Psoas muscle (tissue), 8 donors: ENCODE measurements at regions of chr4 and their contacts with region 1.

Region 1: GRCh38 chr4:85798012-85798770 is 323.2 kb downstream of the ARHGAP24 start:
- DNase-seq: no peak
- ATAC-seq: no peak
- H3K4me3 ChIP-seq: no peak overlapping the region
- H3K27ac ChIP-seq: no peak overlapping the region
- H3K4me1 ChIP-seq: peaks cover under 1% of the 10 kb centered on the region
- H3K27me3 ChIP-seq: no peaks in the 10 kb centered on the region
- CTCF ChIP-seq: no peak

Region 2: DNA sequence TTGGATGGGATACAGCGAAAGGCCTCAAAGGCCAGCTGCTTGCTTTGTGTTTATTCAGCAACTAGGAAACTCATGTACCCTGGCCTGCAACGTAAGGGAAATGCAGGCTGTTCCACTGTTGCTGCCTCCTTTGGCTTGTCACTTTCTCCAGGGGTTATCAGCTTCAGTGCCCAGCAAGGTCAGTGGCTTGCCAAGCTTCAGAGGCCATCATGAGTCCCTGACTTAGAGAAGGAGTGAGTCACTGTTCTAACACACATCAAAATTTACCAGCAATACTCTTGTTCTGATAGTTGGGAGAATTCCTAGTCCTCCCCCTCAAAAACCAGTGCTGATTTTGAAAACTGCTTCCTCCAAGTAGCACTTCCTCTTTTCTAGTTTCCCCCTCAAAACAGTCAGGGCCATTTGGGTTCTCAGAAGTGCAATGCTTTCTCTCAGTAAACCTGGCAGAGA is 72.4 kb before region 1 on chr4:
- intact Hi-C with region 1: no loop called
- DNase-seq: peak; percentile 44 to 59
- ATAC-seq: peak; percentile 11 to 65 (median 64)
- H3K4me3 ChIP-seq: no peak overlapping the region
- H3K27ac ChIP-seq: peak overlapping the region; percentile 48
- H3K4me1 ChIP-seq: peaks cover 2% of the 10 kb centered on the region
- H3K27me3 ChIP-seq: no peaks in the 10 kb centered on the region
- CTCF ChIP-seq: no peak

Region 3: DNA sequence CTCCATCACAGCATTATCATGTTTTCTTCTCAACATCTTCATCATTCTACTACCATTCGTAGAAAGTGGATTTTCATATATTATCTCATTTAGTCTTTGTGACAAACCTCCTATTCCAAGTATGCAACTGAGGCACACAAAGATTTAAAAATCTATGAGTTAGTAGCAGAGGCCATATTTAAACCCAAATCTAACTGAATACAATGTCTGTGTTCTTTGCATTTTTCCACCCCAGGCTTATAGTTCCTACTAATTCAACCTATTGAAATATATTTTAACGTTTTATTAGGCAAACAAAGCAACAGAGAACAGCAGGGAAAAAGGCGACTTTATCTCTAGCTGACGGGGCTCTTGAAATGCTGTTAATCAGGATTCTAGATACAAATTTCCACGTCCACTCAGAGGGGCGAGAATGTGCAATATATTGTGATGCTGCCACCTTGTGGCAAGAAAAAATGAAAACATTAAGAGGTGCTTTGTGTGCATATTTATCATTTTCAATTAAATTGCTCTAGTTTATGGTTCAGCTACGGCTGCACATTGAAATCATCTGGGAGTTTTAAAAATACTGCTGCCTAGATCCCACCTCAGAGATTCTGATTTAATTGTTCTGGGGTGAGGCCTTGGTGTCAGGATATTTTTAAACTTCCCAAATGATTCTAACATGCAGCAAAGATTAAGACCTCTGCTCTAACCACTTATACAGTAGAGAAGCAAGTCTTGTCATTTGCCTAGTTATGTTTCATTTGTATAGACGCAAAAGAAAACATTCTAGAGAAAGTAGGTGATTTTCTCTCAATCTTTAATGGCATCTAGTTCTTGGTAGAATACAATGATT is 245.8 kb after region 1 on chr4:
- intact Hi-C with region 1: loop called in 1 of 2 experiments (anchors 5 kb)
- DNase-seq: no peak
- ATAC-seq: peak in 1 of 4 donors; percentile 55
- H3K4me3 ChIP-seq: no peak overlapping the region
- H3K27ac ChIP-seq: no peak overlapping the region
- H3K4me1 ChIP-seq: no peaks in the 10 kb centered on the region
- H3K27me3 ChIP-seq: no peaks in the 10 kb centered on the region
- CTCF ChIP-seq: peak; percentile 59

Region 4: GRCh38 chr4:86130160-86130933 is 332.2 kb after region 1 on chr4:
- intact Hi-C with region 1: no loop called
- DNase-seq: no peak
- ATAC-seq: no peak
- H3K4me3 ChIP-seq: no peak overlapping the region
- H3K27ac ChIP-seq: no peak overlapping the region
- H3K4me1 ChIP-seq: no peaks in the 10 kb centered on the region
- H3K27me3 ChIP-seq: no peaks in the 10 kb centered on the region
- CTCF ChIP-seq: no peak

Region 5: GRCh38 chr4:86264241-86264640 is 466.1 kb after region 1 on chr4:
- intact Hi-C with region 1: no loop called
- DNase-seq: no peak
- ATAC-seq: no peak
- H3K4me3 ChIP-seq: no peak overlapping the region
- H3K27ac ChIP-seq: no peak overlapping the region
- H3K4me1 ChIP-seq: no peaks in the 10 kb centered on the region
- H3K27me3 ChIP-seq: no peaks in the 10 kb centered on the region
- CTCF ChIP-seq: no peak